Activated CD4-positive, alpha-beta memory T cell treated with anti-CD3 and anti-CD28 coated beads for 36 hours (primary cell): ENCODE measurements at regions of chr7 and their contacts with region 1.

Region 1: GRCh38 chr7:151782598-151783448 is 94.1 kb downstream of the PRKAG2 start:
- DNase-seq: peak; percentile 80
- H3K4me3 Mint-ChIP-seq: peak overlapping the region; percentile 76
- H3K27ac Mint-ChIP-seq: no peak overlapping the region
- H3K4me1 Mint-ChIP-seq: peaks cover 12% of the 10 kb centered on the region
- H3K27me3 Mint-ChIP-seq: no peaks in the 10 kb centered on the region

Region 2: GRCh38 chr7:151570366-151570915 is 212.4 kb before region 1 on chr7:
- CTCF ChIA-PET with region 1: interaction called, 10 read pairs
- POLR2A ChIA-PET with region 1: no interaction called
- intact Hi-C with region 1: no loop called
- DNase-seq: no peak
- H3K4me3 Mint-ChIP-seq: no peak overlapping the region
- H3K27ac Mint-ChIP-seq: no peak overlapping the region
- H3K4me1 Mint-ChIP-seq: no peaks in the 10 kb centered on the region
- H3K27me3 Mint-ChIP-seq: no peaks in the 10 kb centered on the region

Region 3: GRCh38 chr7:151769188-151769841 is 13.5 kb before region 1 on chr7:
- CTCF ChIA-PET with region 1: interaction called, 39 read pairs
- POLR2A ChIA-PET with region 1: no interaction called
- intact Hi-C with region 1: no loop called
- DNase-seq: peak; percentile 61
- H3K4me3 Mint-ChIP-seq: peak overlapping the region; percentile 24
- H3K27ac Mint-ChIP-seq: peak overlapping the region; percentile 87
- H3K4me1 Mint-ChIP-seq: peaks cover 47% of the 10 kb centered on the region
- H3K27me3 Mint-ChIP-seq: no peaks in the 10 kb centered on the region

Region 4: DNA sequence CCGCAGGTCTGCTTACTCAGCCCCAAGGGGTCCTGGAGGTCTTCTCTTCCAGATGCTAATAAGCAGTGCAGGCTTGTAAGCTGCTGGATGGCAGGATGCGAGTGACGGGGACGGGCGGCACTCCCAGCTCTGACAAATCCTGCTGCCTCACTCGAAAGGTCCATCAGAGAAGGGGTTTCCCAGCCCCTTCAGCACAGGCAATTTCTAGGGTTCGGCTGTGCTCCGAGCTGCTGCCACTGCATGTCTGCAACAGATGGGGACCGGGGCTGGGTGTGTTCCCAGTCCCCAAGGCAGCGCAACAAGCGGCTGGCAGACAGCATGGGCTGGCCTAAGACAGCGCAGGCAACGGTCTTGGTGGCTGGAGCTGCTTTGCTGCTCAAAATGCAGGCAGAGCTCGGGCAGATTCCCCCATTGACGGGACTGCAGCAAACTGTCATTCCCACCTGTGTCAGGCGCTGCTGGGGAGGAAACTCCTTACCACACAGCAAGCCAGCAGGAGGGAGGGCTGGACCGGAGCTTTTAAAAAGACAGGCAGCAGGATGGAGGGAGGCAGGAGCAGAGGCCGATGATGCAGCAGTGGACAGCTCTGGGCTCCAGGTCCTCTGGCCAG is 31.7 kb after region 1 on chr7:
- CTCF ChIA-PET with region 1: interaction called, 10 read pairs
- POLR2A ChIA-PET with region 1: no interaction called
- intact Hi-C with region 1: no loop called
- DNase-seq: no peak
- H3K4me3 Mint-ChIP-seq: no peak overlapping the region
- H3K27ac Mint-ChIP-seq: no peak overlapping the region
- H3K4me1 Mint-ChIP-seq: peaks cover 20% of the 10 kb centered on the region
- H3K27me3 Mint-ChIP-seq: no peaks in the 10 kb centered on the region

Region 5: GRCh38 chr7:152145853-152146466 is 363.1 kb after region 1 on chr7:
- CTCF ChIA-PET with region 1: interaction called, 4 read pairs
- POLR2A ChIA-PET with region 1: no interaction called
- intact Hi-C with region 1: loop called (anchors 5 kb)
- DNase-seq: peak; percentile 45
- H3K4me3 Mint-ChIP-seq: no peak overlapping the region
- H3K27ac Mint-ChIP-seq: peak overlapping the region; percentile 90
- H3K4me1 Mint-ChIP-seq: peaks cover 41% of the 10 kb centered on the region
- H3K27me3 Mint-ChIP-seq: no peaks in the 10 kb centered on the region